Lower lobe of right lung (tissue), 2 donors: ENCODE measurements at regions of chr15 and their contacts with region 1.

Region 1: GRCh38 chr15:101014921-101015841 is 96.0 kb downstream of the LRRK1 start:
- DNase-seq: peak; percentile 80
- ATAC-seq: peak; percentile 72 to 73
- H3K4me3 ChIP-seq: no peak overlapping the region
- H3K27ac ChIP-seq: no peak overlapping the region
- H3K4me1 ChIP-seq: peaks cover 16% of the 10 kb centered on the region
- H3K27me3 ChIP-seq: no peaks in the 10 kb centered on the region
- CTCF ChIP-seq: peak; percentile 82

Region 2: GRCh38 chr15:101258238-101259144 is 243.3 kb after region 1 on chr15:
- intact Hi-C with region 1: loop called (anchors 5 kb)
- DNase-seq: no peak
- ATAC-seq: peak; percentile 81 to 84
- H3K4me3 ChIP-seq: no peak overlapping the region
- H3K27ac ChIP-seq: no peak overlapping the region
- H3K4me1 ChIP-seq: peaks cover 8% of the 10 kb centered on the region
- H3K27me3 ChIP-seq: no peaks in the 10 kb centered on the region
- CTCF ChIP-seq: peak; percentile 89